CD8-positive, alpha-beta memory T cell (primary cell): ENCODE measurements at regions of chr6 and their contacts with region 1.

Region 1: DNA sequence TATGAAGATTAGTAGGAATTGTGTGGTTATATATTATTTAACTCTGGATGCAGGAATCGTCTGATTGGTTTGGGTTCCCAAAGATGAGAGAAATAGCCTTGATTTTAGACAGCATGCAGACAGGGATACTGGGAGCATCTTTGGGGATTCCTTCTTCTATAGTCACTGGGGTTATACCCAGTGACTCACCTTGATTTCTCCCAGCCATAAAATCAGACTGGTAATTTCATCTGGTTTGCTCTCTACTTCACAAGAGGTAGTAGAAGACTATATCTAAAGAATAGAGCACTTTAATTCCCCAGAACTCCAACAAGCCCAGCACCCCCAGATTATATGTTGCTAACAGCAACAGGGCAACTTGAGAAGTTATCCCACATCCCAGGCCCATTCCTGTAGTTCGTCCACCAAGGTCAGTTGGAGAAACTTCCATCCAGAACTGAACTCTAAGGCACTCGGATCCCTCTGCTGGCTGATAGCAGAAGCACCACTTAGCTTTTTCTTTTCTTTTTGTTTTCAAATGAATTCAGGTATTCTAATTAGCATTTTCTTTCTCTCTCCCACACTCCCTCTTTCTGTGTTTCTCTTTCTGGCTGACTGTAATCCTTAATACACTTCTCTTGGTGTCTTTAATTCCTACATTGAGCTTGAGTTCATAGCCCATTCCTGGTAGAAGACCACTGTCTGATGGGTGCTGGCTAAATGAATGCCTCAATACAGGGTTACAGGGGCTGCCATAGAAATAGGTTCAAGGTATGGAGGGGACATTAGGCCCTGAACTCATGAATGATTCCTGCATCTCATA is 20.4 kb upstream of the EFHC1 start:
- DNase-seq: peak in 2 of 5 donors; percentile 30 to 61
- H3K4me3 ChIP-seq: peak overlapping the region; percentile 6
- H3K4me3 Mint-ChIP-seq: peak overlapping the region in 5 of 7 donors; percentile 27 to 79 (median 54)
- H3K27ac ChIP-seq: no peak overlapping the region
- H3K27ac Mint-ChIP-seq: peak overlapping the region; percentile 87 to 98 (median 92)
- H3K4me1 ChIP-seq: peaks cover 68% of the 10 kb centered on the region
- H3K4me1 Mint-ChIP-seq: peaks cover 58 to 74% (median 63%) of the 10 kb centered on the region in 3 donors
- H3K27me3 ChIP-seq: no peaks in the 10 kb centered on the region
- H3K27me3 Mint-ChIP-seq: no peaks in the 10 kb centered on the region

Region 2: GRCh38 chr6:52333840-52334200 is 65.9 kb before region 1 on chr6:
- CTCF ChIA-PET with region 1: interaction called, 11 read pairs
- POLR2A ChIA-PET with region 1: interaction called, 3 read pairs
- DNase-seq: peak in 3 of 5 donors; percentile 46 to 59 (median 52)
- H3K4me3 ChIP-seq: peak overlapping the region; percentile 28
- H3K4me3 Mint-ChIP-seq: peak overlapping the region in 6 of 7 donors; percentile 64 to 84 (median 76)
- H3K27ac ChIP-seq: peak overlapping the region; percentile 46
- H3K27ac Mint-ChIP-seq: peak overlapping the region; percentile 78 to 98 (median 96)
- H3K4me1 ChIP-seq: peaks cover 66% of the 10 kb centered on the region
- H3K4me1 Mint-ChIP-seq: peaks cover 54 to 74% (median 63%) of the 10 kb centered on the region in 3 donors
- H3K27me3 ChIP-seq: no peaks in the 10 kb centered on the region
- H3K27me3 Mint-ChIP-seq: no peaks in the 10 kb centered on the region

Region 3: DNA sequence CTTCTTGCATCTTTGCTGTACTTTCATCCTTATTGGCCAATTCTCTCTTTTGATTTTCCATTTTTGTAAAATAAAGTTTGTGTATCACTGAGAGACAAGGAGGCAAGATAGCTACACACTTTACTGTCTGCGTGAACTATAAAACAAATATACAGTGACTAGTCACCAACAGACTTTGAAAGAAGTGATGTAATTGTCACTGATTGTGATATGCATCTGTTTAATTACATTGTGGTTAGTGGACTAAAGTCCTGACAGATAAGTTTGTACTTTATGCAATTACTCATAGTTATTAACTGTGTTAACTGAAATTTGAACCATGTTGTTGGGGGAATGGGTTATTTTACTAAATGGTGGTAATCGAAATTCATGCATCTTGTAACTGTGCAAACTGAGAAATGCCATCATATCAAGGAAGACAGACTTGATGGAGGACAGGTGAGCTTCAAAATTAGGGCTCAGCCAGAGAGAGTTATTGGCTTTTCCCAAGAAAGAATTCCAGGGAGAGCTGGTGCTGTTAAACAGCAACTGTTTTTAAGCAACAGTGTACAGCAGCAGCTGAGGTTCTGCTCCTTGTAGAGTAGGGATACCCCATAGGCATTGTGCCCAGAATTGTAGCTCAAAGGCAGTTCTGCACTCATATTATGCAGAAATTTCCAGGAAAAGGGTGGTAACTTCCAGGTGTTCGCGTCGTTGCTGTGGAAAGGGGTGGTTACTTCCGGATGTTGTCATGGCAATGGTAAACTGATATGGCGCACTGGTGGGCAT is 83.4 kb after region 1 on chr6:
- CTCF ChIA-PET with region 1: no interaction called
- POLR2A ChIA-PET with region 1: no interaction called
- DNase-seq: no peak
- H3K4me3 ChIP-seq: no peak overlapping the region
- H3K4me3 Mint-ChIP-seq: no peak overlapping the region
- H3K27ac ChIP-seq: peak overlapping the region; percentile 39
- H3K27ac Mint-ChIP-seq: no peak overlapping the region
- H3K4me1 ChIP-seq: no peaks in the 10 kb centered on the region
- H3K4me1 Mint-ChIP-seq: no peaks in the 10 kb centered on the region
- H3K27me3 ChIP-seq: no peaks in the 10 kb centered on the region
- H3K27me3 Mint-ChIP-seq: peaks cover 0 to 2% of the 10 kb centered on the region in 2 donors